CD14-positive monocyte (primary cell): ENCODE measurements at regions of chr3 and their contacts with region 1.

Region 1: DNA sequence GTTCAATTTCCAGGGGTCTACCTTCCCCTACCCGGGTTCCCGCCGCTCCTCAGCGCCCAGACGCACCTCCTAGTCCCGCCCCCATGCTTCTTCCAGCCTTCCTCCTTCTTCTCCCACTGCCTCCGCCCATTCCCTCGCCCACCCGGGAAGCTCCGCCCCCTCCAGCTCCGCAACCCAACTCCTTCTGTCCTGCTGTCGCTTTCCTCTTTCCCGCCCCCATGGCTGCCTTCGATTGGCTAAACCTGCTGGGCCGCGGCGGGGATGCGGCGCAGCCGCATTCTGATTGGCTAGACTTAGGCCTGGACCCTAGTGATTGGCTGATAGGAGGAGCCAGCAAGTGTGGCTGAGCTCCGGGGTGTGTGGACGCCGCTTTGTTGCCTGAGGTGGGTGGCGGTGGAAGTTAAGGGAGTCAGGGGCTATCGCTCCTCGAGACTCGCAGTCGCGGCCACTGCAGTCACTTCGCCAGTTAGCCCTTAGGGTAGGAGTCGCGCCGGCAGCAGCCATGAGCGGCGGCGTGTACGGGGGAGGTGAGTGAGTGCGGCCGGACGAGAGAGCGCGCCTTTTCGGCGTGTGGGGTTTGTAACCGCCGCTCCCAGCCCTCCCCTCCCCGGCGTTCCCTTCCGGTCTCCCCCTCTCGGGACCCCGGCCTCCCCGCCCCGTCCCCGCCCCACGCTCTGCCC is at the start of gene ACTL6A:
- DNase-seq: peak; percentile 97 to 99 (median 99)
- H3K4me3 ChIP-seq: peak within 1 kb of the TSS; percentile 69 to 98 (median 96)
- H3K4me3 Mint-ChIP-seq: peak within 1 kb of the TSS; percentile 96 to 99
- H3K27ac ChIP-seq: peak within 1 kb of the TSS; percentile 55 to 58
- H3K27ac Mint-ChIP-seq: peak within 1 kb of the TSS; percentile 81 to 93 (median 90)
- H3K4me1 ChIP-seq: peaks cover 11 to 18% of the 10 kb centered on the region in 2 donors
- H3K4me1 Mint-ChIP-seq: peaks cover 25% of the 10 kb centered on the region
- H3K27me3 ChIP-seq: no peaks in the 10 kb centered on the region
- H3K27me3 Mint-ChIP-seq: no peaks in the 10 kb centered on the region
- CTCF ChIP-seq: no peak
- polyA plus RNA-seq, gene ACTL6A: 28.2 to 37.2 (median 35.9) TPM

Region 2: DNA sequence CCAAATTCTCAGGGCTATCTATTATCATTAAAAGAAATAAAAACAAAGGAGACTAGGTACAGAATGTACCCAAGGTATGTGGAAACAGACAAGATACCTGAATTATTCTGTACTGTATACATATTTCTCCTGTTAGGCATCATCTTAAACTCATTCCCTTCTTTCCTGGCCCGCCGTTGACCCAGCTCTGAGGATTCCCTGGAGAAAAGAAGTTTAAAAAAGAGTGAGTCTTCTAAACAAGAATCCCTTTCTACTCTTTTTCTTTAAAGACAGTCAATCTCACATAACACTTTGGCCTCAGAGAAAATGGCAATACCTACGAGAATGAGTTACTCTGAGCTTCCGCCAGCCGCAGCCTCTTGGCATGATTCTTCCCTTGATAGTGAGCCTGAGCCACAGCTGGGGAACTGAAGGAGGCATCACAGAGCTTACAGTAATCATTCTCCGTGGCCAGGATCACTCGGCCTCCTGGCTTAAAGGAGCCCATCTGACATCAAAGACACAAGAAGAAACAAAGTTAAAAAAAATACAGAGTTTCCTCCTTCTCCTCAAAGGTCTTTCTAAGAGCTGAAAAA is 535.3 kb before region 1 on chr3:
- intact Hi-C with region 1: loop called in 1 of 2 experiments (anchors 10 kb)
- DNase-seq: no peak
- H3K4me3 ChIP-seq: no peak overlapping the region
- H3K4me3 Mint-ChIP-seq: no peak overlapping the region
- H3K27ac ChIP-seq: no peak overlapping the region
- H3K27ac Mint-ChIP-seq: no peak overlapping the region
- H3K4me1 ChIP-seq: no peaks in the 10 kb centered on the region
- H3K4me1 Mint-ChIP-seq: no peaks in the 10 kb centered on the region
- H3K27me3 ChIP-seq: no peaks in the 10 kb centered on the region
- H3K27me3 Mint-ChIP-seq: no peaks in the 10 kb centered on the region
- CTCF ChIP-seq: no peak

Region 3: GRCh38 chr3:179227349-179227748 is 335.4 kb before region 1 on chr3:
- intact Hi-C with region 1: no loop called
- DNase-seq: no peak
- H3K4me3 ChIP-seq: no peak overlapping the region
- H3K4me3 Mint-ChIP-seq: no peak overlapping the region
- H3K27ac ChIP-seq: no peak overlapping the region
- H3K27ac Mint-ChIP-seq: peak overlapping the region in 1 of 7 donors; percentile 2
- H3K4me1 ChIP-seq: no peaks in the 10 kb centered on the region
- H3K4me1 Mint-ChIP-seq: no peaks in the 10 kb centered on the region
- H3K27me3 ChIP-seq: no peaks in the 10 kb centered on the region
- H3K27me3 Mint-ChIP-seq: peaks cover 0 to 2% (median 0%) of the 10 kb centered on the region in 3 donors
- CTCF ChIP-seq: no peak

Region 4: DNA sequence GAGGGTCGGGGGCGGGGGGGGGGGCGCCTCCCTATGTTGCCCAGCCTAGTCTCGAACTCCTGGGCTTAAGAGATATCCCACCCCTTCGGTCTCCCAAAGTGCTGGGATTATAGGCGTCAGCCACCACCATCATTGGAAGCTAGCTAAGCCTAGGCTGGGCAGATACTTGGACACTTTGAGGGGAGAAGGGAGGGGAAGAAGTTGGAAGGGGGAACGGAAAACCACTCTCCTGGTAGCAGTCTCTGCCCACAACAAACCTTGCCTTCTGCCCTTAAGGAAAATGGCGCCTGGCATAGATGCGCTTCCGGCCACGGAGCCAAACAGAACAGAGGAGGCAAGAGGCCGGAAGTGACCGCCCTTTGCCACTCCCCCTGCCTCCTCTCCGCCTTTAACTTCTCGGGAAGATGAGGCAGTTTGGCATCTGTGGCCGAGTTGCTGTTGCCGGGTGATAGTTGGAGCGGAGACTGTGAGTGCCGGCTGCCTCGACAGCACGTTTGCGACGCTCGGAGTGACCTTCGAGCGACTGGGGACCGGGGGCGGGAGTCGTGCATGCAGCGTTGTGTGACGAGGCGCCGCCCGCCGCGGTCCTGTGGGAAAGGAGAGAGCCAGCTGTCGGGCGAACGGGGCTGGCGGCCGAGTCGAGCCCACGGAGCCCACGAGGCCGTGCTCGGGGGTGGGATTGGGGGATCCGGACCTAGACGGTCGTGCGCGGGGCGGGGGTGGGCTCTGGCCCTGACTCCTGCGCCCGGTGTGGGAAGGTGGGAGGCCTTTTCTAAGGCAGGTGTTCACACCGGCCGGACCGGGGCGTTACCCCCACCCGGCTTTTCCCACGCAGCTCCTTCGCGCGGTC is 215.2 kb before region 1 on chr3 and contains the start of gene MFN1:
- intact Hi-C with region 1: loop called in 1 of 2 experiments (anchors 5 kb)
- DNase-seq: peak; percentile 86 to 93 (median 90)
- H3K4me3 ChIP-seq: peak within 1 kb of the TSS; percentile 59 to 95 (median 69)
- H3K4me3 Mint-ChIP-seq: peak within 1 kb of the TSS; percentile 97 to 98
- H3K27ac ChIP-seq: peak within 1 kb of the TSS; percentile 45 to 85
- H3K27ac Mint-ChIP-seq: peak within 1 kb of the TSS; percentile 94 to 99 (median 96)
- H3K4me1 ChIP-seq: peaks cover 15 to 22% of the 10 kb centered on the region in 2 donors
- H3K4me1 Mint-ChIP-seq: peaks cover 11% of the 10 kb centered on the region
- H3K27me3 ChIP-seq: no peaks in the 10 kb centered on the region
- H3K27me3 Mint-ChIP-seq: peaks cover 2 to 4% (median 4%) of the 10 kb centered on the region in 3 donors
- CTCF ChIP-seq: no peak
- polyA plus RNA-seq, gene MFN1: 5.6 to 15.2 (median 12.2) TPM

Region 5: GRCh38 chr3:179432021-179432420 is 130.7 kb before region 1 on chr3:
- intact Hi-C with region 1: no loop called
- DNase-seq: peak; percentile 48 to 72 (median 57)
- H3K4me3 ChIP-seq: peak overlapping the region; percentile 12 to 65 (median 21)
- H3K4me3 Mint-ChIP-seq: peak overlapping the region; percentile 58 to 78
- H3K27ac ChIP-seq: peak overlapping the region; percentile 40 to 80
- H3K27ac Mint-ChIP-seq: peak overlapping the region; percentile 44 to 91 (median 87)
- H3K4me1 ChIP-seq: peaks cover 27 to 34% of the 10 kb centered on the region in 2 donors
- H3K4me1 Mint-ChIP-seq: peaks cover 49% of the 10 kb centered on the region
- H3K27me3 ChIP-seq: no peaks in the 10 kb centered on the region
- H3K27me3 Mint-ChIP-seq: peaks cover 0 to 1% (median 0%) of the 10 kb centered on the region in 3 donors
- CTCF ChIP-seq: no peak

Region 6: GRCh38 chr3:179446501-179446900 is 116.2 kb before region 1 on chr3:
- intact Hi-C with region 1: loop called (anchors 5 kb)
- DNase-seq: peak in 2 of 3 donors; percentile 14 to 15
- H3K4me3 ChIP-seq: no peak overlapping the region
- H3K4me3 Mint-ChIP-seq: no peak overlapping the region
- H3K27ac ChIP-seq: no peak overlapping the region
- H3K27ac Mint-ChIP-seq: no peak overlapping the region
- H3K4me1 ChIP-seq: peaks cover 14 to 16% of the 10 kb centered on the region in 2 donors
- H3K4me1 Mint-ChIP-seq: peaks cover 35% of the 10 kb centered on the region
- H3K27me3 ChIP-seq: no peaks in the 10 kb centered on the region
- H3K27me3 Mint-ChIP-seq: no peaks in the 10 kb centered on the region
- CTCF ChIP-seq: peak; percentile 40

Region 7: GRCh38 chr3:179451265-179452175 is 111.2 kb before region 1 on chr3 and contains the start of gene GNB4:
- intact Hi-C with region 1: loop called (anchors 5 kb)
- DNase-seq: peak; percentile 88 to 91 (median 88)
- H3K4me3 ChIP-seq: peak within 1 kb of the TSS; percentile 77 to 99 (median 87)
- H3K4me3 Mint-ChIP-seq: peak within 1 kb of the TSS; percentile 89 to 91
- H3K27ac ChIP-seq: peak within 1 kb of the TSS; percentile 89 to 92
- H3K27ac Mint-ChIP-seq: peak within 1 kb of the TSS; percentile 88 to 97 (median 95)
- H3K4me1 ChIP-seq: peaks cover 22 to 25% of the 10 kb centered on the region in 2 donors
- H3K4me1 Mint-ChIP-seq: peaks cover 38% of the 10 kb centered on the region
- H3K27me3 ChIP-seq: no peaks in the 10 kb centered on the region
- H3K27me3 Mint-ChIP-seq: peaks cover 0 to 4% (median 0%) of the 10 kb centered on the region in 3 donors
- CTCF ChIP-seq: no peak
- polyA plus RNA-seq, gene GNB4: 15.4 to 65.1 (median 63.5) TPM

Region 8: GRCh38 chr3:179604321-179605078 is 41.8 kb after region 1 on chr3 and contains the starts of genes MRPL47 and NDUFB5:
- intact Hi-C with region 1: loop called in 1 of 2 experiments (anchors 5 kb)
- DNase-seq: peak; percentile 95 to 98 (median 97)
- H3K4me3 ChIP-seq: peak within 1 kb of the TSS; percentile 79 to 96 (median 96)
- H3K4me3 Mint-ChIP-seq: peak within 1 kb of the TSS; percentile 97 to 100
- H3K27ac ChIP-seq: peak within 1 kb of the TSS; percentile 95 to 99
- H3K27ac Mint-ChIP-seq: peak within 1 kb of the TSS; percentile 99 to 100 (median 99)
- H3K4me1 ChIP-seq: peaks cover 33 to 39% of the 10 kb centered on the region in 2 donors
- H3K4me1 Mint-ChIP-seq: peaks cover 42% of the 10 kb centered on the region
- H3K27me3 ChIP-seq: no peaks in the 10 kb centered on the region
- H3K27me3 Mint-ChIP-seq: peaks cover 0 to 4% (median 0%) of the 10 kb centered on the region in 3 donors
- CTCF ChIP-seq: no peak
- polyA plus RNA-seq, gene MRPL47: 10.3 to 46.4 (median 44.3) TPM
- polyA plus RNA-seq, gene NDUFB5: 30.8 to 144 (median 132) TPM

Region 9: DNA sequence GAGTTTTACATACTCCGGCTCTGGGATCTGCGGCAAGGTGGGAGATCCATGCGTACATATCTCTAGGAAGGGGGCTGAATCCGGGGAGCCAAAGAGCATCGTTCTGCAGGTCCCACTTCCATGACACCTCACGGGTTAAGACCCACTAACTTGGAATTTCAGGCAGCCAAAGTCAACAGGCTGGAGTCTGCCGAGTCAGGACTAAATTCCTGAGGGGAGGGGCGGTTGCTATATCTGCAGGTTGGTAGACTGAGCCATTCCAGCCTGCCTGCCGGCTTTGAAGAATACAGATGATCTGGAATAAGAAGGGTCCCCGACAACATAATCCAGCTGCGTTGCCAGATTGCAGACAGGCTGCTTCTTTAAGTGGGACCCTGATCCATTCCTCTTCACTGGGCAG is 539.4 kb after region 1 on chr3:
- intact Hi-C with region 1: no loop called
- DNase-seq: no peak
- H3K4me3 ChIP-seq: no peak overlapping the region
- H3K4me3 Mint-ChIP-seq: no peak overlapping the region
- H3K27ac ChIP-seq: no peak overlapping the region
- H3K27ac Mint-ChIP-seq: no peak overlapping the region
- H3K4me1 ChIP-seq: no peaks in the 10 kb centered on the region
- H3K4me1 Mint-ChIP-seq: no peaks in the 10 kb centered on the region
- H3K27me3 ChIP-seq: no peaks in the 10 kb centered on the region
- H3K27me3 Mint-ChIP-seq: peaks cover 0 to 8% (median 2%) of the 10 kb centered on the region in 3 donors
- CTCF ChIP-seq: no peak

Region 10: GRCh38 chr3:180782195-180782984 is 1219.7 kb after region 1 on chr3:
- intact Hi-C with region 1: no loop called
- DNase-seq: no peak
- H3K4me3 ChIP-seq: no peak overlapping the region
- H3K4me3 Mint-ChIP-seq: no peak overlapping the region
- H3K27ac ChIP-seq: no peak overlapping the region
- H3K27ac Mint-ChIP-seq: no peak overlapping the region
- H3K4me1 ChIP-seq: no peaks in the 10 kb centered on the region
- H3K4me1 Mint-ChIP-seq: no peaks in the 10 kb centered on the region
- H3K27me3 ChIP-seq: no peaks in the 10 kb centered on the region
- H3K27me3 Mint-ChIP-seq: no peaks in the 10 kb centered on the region
- CTCF ChIP-seq: no peak